B cell (primary cell): ENCODE measurements at regions of chr18 and their contacts with region 1.

Region 1: GRCh38 chr18:21704603-21705364 is at the start of gene ABHD3:
- DNase-seq: peak; percentile 93
- ATAC-seq: peak; percentile 93
- H3K4me3 ChIP-seq: peak within 1 kb of the TSS; percentile 66 to 87 (median 69)
- H3K4me3 Mint-ChIP-seq: peak within 1 kb of the TSS; percentile 98
- H3K27ac ChIP-seq: peak within 1 kb of the TSS; percentile 82 to 92
- H3K27ac Mint-ChIP-seq: peak within 1 kb of the TSS; percentile 95
- H3K4me1 ChIP-seq: peaks cover 10 to 11% of the 10 kb centered on the region in 2 donors
- H3K4me1 Mint-ChIP-seq: peaks cover 20% of the 10 kb centered on the region
- H3K27me3 ChIP-seq: no peaks in the 10 kb centered on the region
- H3K27me3 Mint-ChIP-seq: no peaks in the 10 kb centered on the region
- CTCF ChIP-seq: peak; percentile 58
- total RNA-seq, gene ABHD3: 27.6 and 32.8 TPM in 2 replicates

Region 2: DNA sequence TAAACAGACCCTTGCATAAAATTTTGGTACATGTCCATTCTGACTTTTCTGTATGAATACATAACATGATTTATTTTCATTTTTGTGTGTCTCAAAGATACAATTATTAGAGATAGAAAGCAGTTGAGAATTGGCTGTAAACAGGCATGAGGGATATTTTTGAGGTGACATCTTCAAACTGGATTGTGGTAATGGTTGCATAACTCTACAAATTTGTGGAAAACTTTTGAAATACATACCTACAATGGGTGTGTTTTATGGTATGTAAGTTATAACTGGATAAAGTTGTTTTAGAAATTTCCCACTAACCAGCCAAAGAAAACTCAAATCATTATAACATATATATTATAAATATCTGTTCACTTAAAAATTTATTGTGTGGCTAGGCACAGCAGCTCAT is 423.2 kb before region 1 on chr18:
- CTCF ChIA-PET with region 1: no interaction called
- POLR2A ChIA-PET with region 1: no interaction called
- intact Hi-C with region 1: no loop called
- DNase-seq: no peak
- ATAC-seq: no peak
- H3K4me3 ChIP-seq: no peak overlapping the region
- H3K4me3 Mint-ChIP-seq: no peak overlapping the region
- H3K27ac ChIP-seq: no peak overlapping the region
- H3K27ac Mint-ChIP-seq: no peak overlapping the region
- H3K4me1 ChIP-seq: no peaks in the 10 kb centered on the region
- H3K4me1 Mint-ChIP-seq: no peaks in the 10 kb centered on the region
- H3K27me3 ChIP-seq: no peaks in the 10 kb centered on the region
- H3K27me3 Mint-ChIP-seq: peaks cover 3% of the 10 kb centered on the region
- CTCF ChIP-seq: no peak

Region 3: DNA sequence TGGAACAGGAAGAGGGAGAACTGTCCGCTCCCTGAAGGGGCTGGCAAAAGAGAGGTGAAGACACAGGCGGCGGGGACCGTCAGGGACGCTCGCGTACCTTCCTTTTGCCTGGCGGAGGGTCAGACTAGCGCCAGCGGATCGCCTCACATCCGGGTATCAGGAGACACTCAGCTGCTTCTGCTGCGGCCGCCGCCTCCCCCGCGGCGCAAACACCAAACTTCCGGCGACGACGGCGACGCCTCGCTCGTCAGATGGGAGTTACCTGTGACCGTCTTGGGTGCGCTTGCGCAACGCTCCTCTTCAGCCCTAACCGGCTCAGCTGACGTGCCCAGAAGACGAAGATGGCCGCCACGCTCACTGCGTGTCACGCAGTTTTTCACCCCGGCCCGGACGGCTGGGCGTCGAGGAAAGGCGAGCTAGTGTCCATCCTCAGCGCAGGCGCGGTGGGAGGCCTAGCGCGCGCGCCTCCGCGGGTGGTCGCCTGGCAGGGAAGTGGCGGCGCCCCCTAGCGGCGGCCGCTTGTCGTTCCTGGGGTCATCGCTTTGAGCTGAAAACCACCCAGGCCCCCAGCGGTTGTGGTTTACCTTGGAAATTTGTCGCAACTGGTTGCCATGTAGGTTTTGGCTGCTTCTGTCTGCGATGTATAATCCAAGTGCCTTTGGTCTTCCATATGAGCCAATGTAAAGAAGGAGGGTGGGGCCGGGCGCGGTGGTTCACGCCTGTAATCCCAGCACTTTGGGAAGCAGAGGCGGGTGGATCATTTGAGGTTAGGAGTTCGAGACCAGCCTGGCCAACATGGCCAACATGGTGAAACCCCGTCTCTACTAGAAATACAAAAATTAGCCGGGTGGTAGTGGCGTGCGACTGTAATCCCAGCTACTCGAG is 104.0 kb before region 1 on chr18 and contains the start of gene ESCO1:
- CTCF ChIA-PET with region 1: interaction called, 12 read pairs
- POLR2A ChIA-PET with region 1: interaction called, 11 read pairs
- intact Hi-C with region 1: no loop called
- DNase-seq: peak; percentile 99
- ATAC-seq: peak; percentile 79
- H3K4me3 ChIP-seq: peak within 1 kb of the TSS; percentile 66 to 99 (median 92)
- H3K4me3 Mint-ChIP-seq: peak within 1 kb of the TSS; percentile 99
- H3K27ac ChIP-seq: peak within 1 kb of the TSS; percentile 99
- H3K27ac Mint-ChIP-seq: peak within 1 kb of the TSS; percentile 100
- H3K4me1 ChIP-seq: peaks cover 37 to 39% of the 10 kb centered on the region in 2 donors
- H3K4me1 Mint-ChIP-seq: peaks cover 47% of the 10 kb centered on the region
- H3K27me3 ChIP-seq: no peaks in the 10 kb centered on the region
- H3K27me3 Mint-ChIP-seq: no peaks in the 10 kb centered on the region
- CTCF ChIP-seq: peak; percentile 99
- total RNA-seq, gene ESCO1: 30.0 and 31.2 TPM in 2 replicates

Region 4: DNA sequence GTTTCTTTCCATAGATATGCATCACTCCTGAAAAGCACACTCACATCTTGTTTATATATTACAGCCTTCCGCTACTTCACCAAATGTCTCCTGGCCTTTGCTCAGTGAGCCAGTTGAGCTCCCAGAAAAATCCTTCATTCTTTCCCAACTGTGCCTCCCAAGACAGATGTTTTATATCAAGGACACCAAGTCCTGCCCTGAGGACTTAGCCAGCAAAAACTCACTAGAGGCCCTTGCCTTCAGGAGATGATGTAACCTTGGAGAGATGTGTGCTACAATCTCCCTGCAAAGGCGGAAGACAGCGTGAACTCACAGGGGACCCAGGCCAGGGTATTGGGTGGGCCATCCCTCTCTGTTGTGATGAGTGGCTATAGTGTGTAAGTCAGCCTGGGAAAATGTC is 799.0 kb after region 1 on chr18:
- CTCF ChIA-PET with region 1: no interaction called
- POLR2A ChIA-PET with region 1: no interaction called
- intact Hi-C with region 1: no loop called
- DNase-seq: no peak
- ATAC-seq: no peak
- H3K4me3 ChIP-seq: no peak overlapping the region
- H3K4me3 Mint-ChIP-seq: no peak overlapping the region
- H3K27ac ChIP-seq: no peak overlapping the region
- H3K27ac Mint-ChIP-seq: no peak overlapping the region
- H3K4me1 ChIP-seq: no peaks in the 10 kb centered on the region
- H3K4me1 Mint-ChIP-seq: no peaks in the 10 kb centered on the region
- H3K27me3 ChIP-seq: no peaks in the 10 kb centered on the region
- H3K27me3 Mint-ChIP-seq: no peaks in the 10 kb centered on the region
- CTCF ChIP-seq: no peak

Region 5: DNA sequence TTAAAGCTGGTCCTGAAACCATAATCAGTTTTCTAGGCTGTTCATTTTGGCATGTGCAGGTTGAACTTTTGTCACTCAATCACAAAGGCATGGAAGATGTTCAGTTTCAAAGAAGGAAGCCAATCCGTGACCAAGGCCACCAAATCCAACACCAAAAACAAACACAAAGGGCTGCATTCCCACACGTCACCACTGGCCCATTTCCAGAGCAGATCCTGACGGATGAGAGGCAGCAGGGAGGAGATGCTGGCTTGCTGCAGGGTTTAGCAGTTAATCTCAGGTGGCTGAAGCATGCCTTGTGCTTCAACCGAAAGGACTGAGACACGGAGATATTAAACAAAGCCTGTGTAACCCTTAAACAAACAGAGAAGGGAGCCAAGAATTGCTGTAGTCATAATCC is 904.9 kb after region 1 on chr18:
- CTCF ChIA-PET with region 1: no interaction called
- POLR2A ChIA-PET with region 1: no interaction called
- intact Hi-C with region 1: no loop called
- DNase-seq: no peak
- ATAC-seq: no peak
- H3K4me3 ChIP-seq: no peak overlapping the region
- H3K4me3 Mint-ChIP-seq: no peak overlapping the region
- H3K27ac ChIP-seq: no peak overlapping the region
- H3K27ac Mint-ChIP-seq: no peak overlapping the region
- H3K4me1 ChIP-seq: no peaks in the 10 kb centered on the region
- H3K4me1 Mint-ChIP-seq: no peaks in the 10 kb centered on the region
- H3K27me3 ChIP-seq: peaks cover 0 to 4% (median 2%) of the 10 kb centered on the region in 4 experiments
- H3K27me3 Mint-ChIP-seq: peaks cover 3% of the 10 kb centered on the region
- CTCF ChIP-seq: no peak